ENCODE measurements at regions of chr14 and their contacts with region 1.

Region 1: GRCh38 chr14:92748259-92749016 is at the start of gene LGMN:
- DNase-seq: peak; percentile 92
- H3K4me3 Mint-ChIP-seq: peak within 1 kb of the TSS; percentile 70
- H3K27ac Mint-ChIP-seq: no peak within 1 kb of the TSS
- H3K4me1 Mint-ChIP-seq: peaks cover 28% of the 10 kb centered on the region
- H3K27me3 Mint-ChIP-seq: peaks cover 73% of the 10 kb centered on the region
- total RNA-seq, gene LGMN: 1.4 and 2.1 TPM in 2 replicates

Region 2: DNA sequence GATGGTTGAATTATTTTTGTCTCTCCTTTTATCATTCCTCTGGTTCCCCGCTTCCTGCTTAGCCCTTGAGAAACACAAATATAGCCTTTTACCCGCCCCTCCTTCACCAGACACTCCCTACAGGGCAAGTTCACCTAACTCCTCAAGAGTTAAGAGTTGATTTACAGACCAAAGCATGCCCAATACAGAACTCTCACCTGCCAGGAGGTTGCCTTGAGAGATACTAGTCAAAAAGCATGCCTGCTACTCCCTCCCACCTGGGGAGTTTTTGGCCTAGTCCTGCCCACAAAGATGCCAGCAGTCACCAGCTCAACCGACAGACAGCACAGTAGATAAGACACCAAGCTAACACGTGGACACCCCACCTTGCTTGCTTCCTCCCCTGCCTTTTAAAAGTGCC is 11.2 kb before region 1 on chr14:
- intact Hi-C with region 1: loop called (anchors 2 kb)
- DNase-seq: no peak
- H3K4me3 Mint-ChIP-seq: peak overlapping the region; percentile 29
- H3K27ac Mint-ChIP-seq: peak overlapping the region; percentile 3
- H3K4me1 Mint-ChIP-seq: peaks cover 10% of the 10 kb centered on the region
- H3K27me3 Mint-ChIP-seq: peaks cover 46% of the 10 kb centered on the region

Region 3: GRCh38 chr14:92768795-92769194 is 20.4 kb after region 1 on chr14:
- intact Hi-C with region 1: loop called (anchors 1 kb)
- DNase-seq: no peak
- H3K4me3 Mint-ChIP-seq: no peak overlapping the region
- H3K27ac Mint-ChIP-seq: peak overlapping the region; percentile 14
- H3K4me1 Mint-ChIP-seq: peaks cover 18% of the 10 kb centered on the region
- H3K27me3 Mint-ChIP-seq: peaks cover 31% of the 10 kb centered on the region

Region 4: GRCh38 chr14:92783816-92784431 is 35.5 kb after region 1 on chr14:
- intact Hi-C with region 1: loop called (anchors 5 kb)
- DNase-seq: peak; percentile 82
- H3K4me3 Mint-ChIP-seq: no peak overlapping the region
- H3K27ac Mint-ChIP-seq: no peak overlapping the region
- H3K4me1 Mint-ChIP-seq: peaks cover 19% of the 10 kb centered on the region
- H3K27me3 Mint-ChIP-seq: peaks cover 4% of the 10 kb centered on the region

Measured in activated CD4-positive, alpha-beta T cell treated with anti-CD3 and anti-CD28 coated beads, Interleukin-2, amount 10 ng/mL, durations not matched to agents 24 days and 14 days (primary cell).